Activated CD4-positive, alpha-beta memory T cell treated with anti-CD3 and anti-CD28 coated beads for 36 hours (primary cell): ENCODE measurements at regions of chr13 and their contacts with region 1.

Region 1: GRCh38 chr13:99269627-99270241 is 11.6 kb upstream of the GPR18 start:
- DNase-seq: no peak
- H3K4me3 Mint-ChIP-seq: no peak overlapping the region
- H3K27ac Mint-ChIP-seq: peak overlapping the region; percentile 62
- H3K4me1 Mint-ChIP-seq: peaks cover 62% of the 10 kb centered on the region
- H3K27me3 Mint-ChIP-seq: no peaks in the 10 kb centered on the region

Region 2: GRCh38 chr13:99200432-99201167 is 69.1 kb before region 1 on chr13 and contains the start of gene UBAC2:
- CTCF ChIA-PET with region 1: interaction called, 29 read pairs
- POLR2A ChIA-PET with region 1: interaction called, 21 read pairs
- intact Hi-C with region 1: no loop called
- DNase-seq: peak; percentile 97
- H3K4me3 Mint-ChIP-seq: peak within 1 kb of the TSS; percentile 90
- H3K27ac Mint-ChIP-seq: peak within 1 kb of the TSS; percentile 90
- H3K4me1 Mint-ChIP-seq: peaks cover 59% of the 10 kb centered on the region
- H3K27me3 Mint-ChIP-seq: no peaks in the 10 kb centered on the region
- total RNA-seq, gene UBAC2: 51.8 to 54.5 TPM

Region 3: DNA sequence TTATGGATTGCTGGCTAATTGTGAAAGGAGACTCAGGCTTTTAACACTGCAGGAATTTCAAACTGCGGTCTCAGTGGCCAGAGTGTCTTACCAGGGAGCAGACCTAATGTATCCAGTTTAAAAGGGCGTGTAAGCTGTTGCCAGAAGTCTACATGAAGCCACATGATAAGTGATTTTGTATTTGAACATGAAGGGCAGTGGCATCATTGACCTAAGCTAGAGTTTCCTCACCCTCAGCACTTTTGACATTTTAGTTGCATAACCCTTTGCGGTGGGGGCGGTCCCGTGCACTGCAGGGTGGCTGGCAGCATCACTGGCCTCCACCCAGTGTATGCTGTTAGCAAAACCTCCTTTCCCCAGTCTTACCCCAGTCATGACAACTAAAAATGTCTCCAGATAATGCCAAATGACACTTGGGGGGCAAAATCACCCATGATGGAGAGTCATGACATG is 12.1 kb after region 1 on chr13:
- CTCF ChIA-PET with region 1: interaction called, 37 read pairs
- POLR2A ChIA-PET with region 1: interaction called, 3 read pairs
- intact Hi-C with region 1: no loop called
- DNase-seq: peak; percentile 77
- H3K4me3 Mint-ChIP-seq: no peak overlapping the region
- H3K27ac Mint-ChIP-seq: peak overlapping the region; percentile 70
- H3K4me1 Mint-ChIP-seq: peaks cover 87% of the 10 kb centered on the region
- H3K27me3 Mint-ChIP-seq: no peaks in the 10 kb centered on the region

Region 4: GRCh38 chr13:99301913-99302636 is 32.3 kb after region 1 on chr13:
- CTCF ChIA-PET with region 1: interaction called, 93 read pairs
- POLR2A ChIA-PET with region 1: interaction called, 10 read pairs
- intact Hi-C with region 1: loop called (anchors 1 kb)
- DNase-seq: no peak
- H3K4me3 Mint-ChIP-seq: peak overlapping the region; percentile 93
- H3K27ac Mint-ChIP-seq: peak overlapping the region; percentile 99
- H3K4me1 Mint-ChIP-seq: peaks cover 65% of the 10 kb centered on the region
- H3K27me3 Mint-ChIP-seq: no peaks in the 10 kb centered on the region

Region 5: GRCh38 chr13:99356158-99357091 is 86.7 kb after region 1 on chr13:
- CTCF ChIA-PET with region 1: interaction called, 27 read pairs
- POLR2A ChIA-PET with region 1: interaction called, 7 read pairs
- intact Hi-C with region 1: no loop called
- DNase-seq: peak; percentile 62
- H3K4me3 Mint-ChIP-seq: peak overlapping the region; percentile 56
- H3K27ac Mint-ChIP-seq: peak overlapping the region; percentile 95
- H3K4me1 Mint-ChIP-seq: peaks cover 96% of the 10 kb centered on the region
- H3K27me3 Mint-ChIP-seq: no peaks in the 10 kb centered on the region

Region 6: DNA sequence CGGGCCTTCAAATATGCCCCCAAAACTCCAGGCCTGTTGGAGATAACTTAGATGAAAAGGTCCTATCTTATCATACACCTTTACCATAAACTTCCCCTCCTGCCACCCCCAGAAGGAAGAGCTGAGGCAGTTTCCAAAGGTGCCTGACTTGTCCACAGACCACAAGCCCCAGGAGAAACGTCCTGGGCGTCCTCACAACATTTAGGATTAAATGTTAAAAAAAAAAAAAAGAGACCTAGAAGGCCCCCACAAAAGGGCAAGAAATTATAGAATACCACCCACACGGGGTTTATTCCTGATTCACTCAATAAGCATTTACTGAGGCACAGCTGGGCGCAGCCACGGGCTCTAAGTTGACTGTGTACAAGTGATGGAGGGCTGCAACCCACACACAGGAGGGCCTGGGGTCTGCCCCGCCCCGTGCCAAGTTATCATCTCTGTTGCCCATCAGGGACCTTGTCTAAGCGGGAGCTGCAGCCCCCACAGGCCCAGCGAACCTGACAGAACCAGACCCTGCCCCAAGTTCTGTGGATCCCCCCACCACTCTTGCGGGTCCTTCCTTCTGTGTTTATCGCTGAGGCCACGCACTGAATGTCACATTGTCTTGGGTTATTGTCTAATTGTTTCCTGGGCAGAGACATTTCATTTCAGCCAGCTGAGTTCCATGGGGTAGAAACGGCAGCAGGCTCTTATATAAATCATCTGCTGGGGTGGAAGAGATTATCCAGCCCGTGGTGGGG is 148.5 kb after region 1 on chr13:
- CTCF ChIA-PET with region 1: interaction called, 14 read pairs
- POLR2A ChIA-PET with region 1: no interaction called
- intact Hi-C with region 1: no loop called
- DNase-seq: peak; percentile 8
- H3K4me3 Mint-ChIP-seq: no peak overlapping the region
- H3K27ac Mint-ChIP-seq: no peak overlapping the region
- H3K4me1 Mint-ChIP-seq: peaks cover 43% of the 10 kb centered on the region
- H3K27me3 Mint-ChIP-seq: peaks cover 2% of the 10 kb centered on the region

Region 7: GRCh38 chr13:99606324-99607066 is 336.8 kb after region 1 on chr13:
- CTCF ChIA-PET with region 1: no interaction called
- POLR2A ChIA-PET with region 1: no interaction called
- intact Hi-C with region 1: loop called (anchors 2 kb)
- DNase-seq: peak; percentile 93
- H3K4me3 Mint-ChIP-seq: peak within 1 kb of the TSS; percentile 85
- H3K27ac Mint-ChIP-seq: peak within 1 kb of the TSS; percentile 72
- H3K4me1 Mint-ChIP-seq: peaks cover 33% of the 10 kb centered on the region
- H3K27me3 Mint-ChIP-seq: no peaks in the 10 kb centered on the region